Endothelial cell of umbilical vein (primary cell): ENCODE measurements at regions of chr3 and their contacts with region 1.

Region 1: GRCh38 chr3:72299321-72299802 is 514.4 kb upstream of the PROK2 start:
- DNase-seq: peak; percentile 96
- H3K4me3 ChIP-seq: no peak overlapping the region
- H3K27ac ChIP-seq: no peak overlapping the region
- H3K4me1 ChIP-seq: peaks cover 23% of the 10 kb centered on the region
- H3K27me3 ChIP-seq: peaks cover 75 to 76% of the 10 kb centered on the region in 2 experiments
- CTCF ChIP-seq: no peak
- POLR2A ChIP-seq: no peak

Region 2: GRCh38 chr3:71601811-71602210 is 697.6 kb before region 1 on chr3:
- CTCF ChIA-PET with region 1: no interaction called
- POLR2A ChIA-PET with region 1: no interaction called
- dilution Hi-C with region 1: no loop called
- intact Hi-C with region 1: no loop called
- DNase-seq: peak; percentile 32
- H3K4me3 ChIP-seq: no peak overlapping the region
- H3K27ac ChIP-seq: peak overlapping the region; percentile 20
- H3K4me1 ChIP-seq: peaks cover 7% of the 10 kb centered on the region
- H3K27me3 ChIP-seq: no peaks in the 10 kb centered on the region
- CTCF ChIP-seq: no peak
- POLR2A ChIP-seq: no peak

Region 3: DNA sequence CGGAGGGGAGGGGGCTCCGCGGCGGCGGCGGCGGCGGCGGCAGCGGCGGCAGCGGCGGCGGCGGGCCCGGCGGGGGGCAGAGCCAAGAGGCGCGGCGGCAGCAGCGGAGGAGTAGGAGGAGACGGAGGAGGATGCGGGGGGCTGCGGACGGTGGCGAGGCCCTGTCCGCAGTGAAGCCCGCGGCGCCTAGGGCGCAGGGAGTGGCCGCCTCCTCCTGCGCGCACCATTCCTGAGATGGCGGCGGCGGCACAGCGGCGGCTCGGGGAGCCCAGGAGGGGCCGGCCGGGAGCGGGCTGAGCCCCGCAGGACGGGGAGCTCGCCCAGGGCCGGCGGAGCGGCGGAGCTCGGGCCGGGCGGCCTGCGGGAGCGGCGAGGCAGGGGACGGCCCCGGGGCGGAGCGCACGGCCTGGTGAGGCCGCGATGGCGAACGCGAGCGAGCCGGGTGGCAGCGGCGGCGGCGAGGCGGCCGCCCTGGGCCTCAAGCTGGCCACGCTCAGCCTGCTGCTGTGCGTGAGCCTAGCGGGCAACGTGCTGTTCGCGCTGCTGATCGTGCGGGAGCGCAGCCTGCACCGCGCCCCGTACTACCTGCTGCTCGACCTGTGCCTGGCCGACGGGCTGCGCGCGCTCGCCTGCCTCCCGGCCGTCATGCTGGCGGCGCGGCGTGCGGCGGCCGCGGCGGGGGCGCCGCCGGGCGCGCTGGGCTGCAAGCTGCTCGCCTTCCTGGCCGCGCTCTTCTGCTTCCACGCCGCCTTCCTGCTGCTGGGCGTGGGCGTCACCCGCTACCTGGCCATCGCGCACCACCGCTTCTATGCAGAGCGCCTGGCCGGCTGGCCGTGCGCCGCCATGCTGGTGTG is 545.5 kb before region 1 on chr3 and contains the start of gene GPR27:
- CTCF ChIA-PET with region 1: no interaction called
- POLR2A ChIA-PET with region 1: no interaction called
- dilution Hi-C with region 1: no loop called
- intact Hi-C with region 1: no loop called
- DNase-seq: peak; percentile 48
- H3K4me3 ChIP-seq: peak within 1 kb of the TSS in 1 of 3 experiments; percentile 33
- H3K27ac ChIP-seq: no peak within 1 kb of the TSS
- H3K4me1 ChIP-seq: peaks cover 4% of the 10 kb centered on the region
- H3K27me3 ChIP-seq: peaks cover 39 to 53% of the 10 kb centered on the region in 2 experiments
- CTCF ChIP-seq: no peak
- POLR2A ChIP-seq: no peak
- total RNA-seq, gene GPR27: not detected in 2 replicates

Region 4: GRCh38 chr3:72310419-72311380 is 11.3 kb after region 1 on chr3:
- CTCF ChIA-PET with region 1: interaction called, 9 read pairs
- POLR2A ChIA-PET with region 1: no interaction called
- dilution Hi-C with region 1: no loop called
- intact Hi-C with region 1: loop called (anchors 1 kb)
- DNase-seq: peak; percentile 97
- H3K4me3 ChIP-seq: no peak overlapping the region
- H3K27ac ChIP-seq: peak overlapping the region; percentile 57
- H3K4me1 ChIP-seq: peaks cover 18% of the 10 kb centered on the region
- H3K27me3 ChIP-seq: peaks cover 17 to 20% of the 10 kb centered on the region in 2 experiments
- CTCF ChIP-seq: peak in 1 of 2 donors; percentile 37
- POLR2A ChIP-seq: peak; percentile 49

Region 5: GRCh38 chr3:72347819-72348319 is 48.5 kb after region 1 on chr3:
- CTCF ChIA-PET with region 1: interaction called, 5 read pairs
- POLR2A ChIA-PET with region 1: interaction called, 3 read pairs
- dilution Hi-C with region 1: no loop called
- intact Hi-C with region 1: loop called (anchors 1 kb)
- DNase-seq: peak; percentile 92
- H3K4me3 ChIP-seq: no peak overlapping the region
- H3K27ac ChIP-seq: no peak overlapping the region
- H3K4me1 ChIP-seq: peaks cover 7% of the 10 kb centered on the region
- H3K27me3 ChIP-seq: peaks cover 25 to 26% of the 10 kb centered on the region in 2 experiments
- CTCF ChIP-seq: peak in 1 of 2 donors; percentile 26
- POLR2A ChIP-seq: peak; percentile 40

Region 6: DNA sequence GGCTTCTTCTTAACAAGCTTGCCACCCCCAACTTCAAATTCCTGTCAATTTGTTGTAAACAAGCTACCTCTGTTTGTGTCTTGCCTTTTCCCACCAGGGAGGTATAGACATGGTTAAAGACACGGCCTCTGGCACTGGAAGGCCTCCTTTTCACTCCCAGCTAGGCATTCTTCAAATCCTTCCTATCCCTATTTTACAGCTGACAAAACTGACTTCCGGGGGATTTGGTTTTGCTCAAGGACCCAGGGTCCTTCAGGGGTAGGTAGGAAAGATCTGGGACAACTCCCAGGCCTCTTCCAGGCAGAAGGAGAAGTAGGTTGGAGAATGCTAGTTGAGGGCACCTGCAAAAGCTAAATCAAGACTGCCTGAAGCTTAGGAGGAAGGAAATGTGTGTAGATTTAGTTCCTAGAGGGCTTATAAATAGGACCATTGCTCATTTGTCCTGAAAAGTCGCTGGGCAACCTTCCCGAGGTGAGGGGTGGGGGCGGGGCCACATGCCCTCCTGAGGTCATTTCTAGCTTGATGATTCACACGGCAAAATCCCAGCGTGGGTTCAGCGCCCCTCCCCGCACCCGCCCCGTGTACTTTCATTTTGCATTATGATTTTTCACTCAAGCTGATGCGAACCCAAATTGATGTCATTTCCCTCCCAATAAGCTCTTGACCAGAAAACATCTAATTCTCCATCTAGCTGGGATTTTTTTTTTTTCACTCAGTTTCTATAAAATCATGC is 183.4 kb after region 1 on chr3:
- CTCF ChIA-PET with region 1: no interaction called
- POLR2A ChIA-PET with region 1: no interaction called
- dilution Hi-C with region 1: no loop called
- intact Hi-C with region 1: loop called (anchors 1 kb)
- DNase-seq: peak; percentile 87
- H3K4me3 ChIP-seq: peak overlapping the region; percentile 24 to 73 (median 62)
- H3K27ac ChIP-seq: peak overlapping the region; percentile 44
- H3K4me1 ChIP-seq: peaks cover 15% of the 10 kb centered on the region
- H3K27me3 ChIP-seq: no peaks in the 10 kb centered on the region
- CTCF ChIP-seq: no peak
- POLR2A ChIP-seq: no peak